HCT116 (cell line): ENCODE measurements at regions of chr11 and their contacts with region 1.

Region 1: DNA sequence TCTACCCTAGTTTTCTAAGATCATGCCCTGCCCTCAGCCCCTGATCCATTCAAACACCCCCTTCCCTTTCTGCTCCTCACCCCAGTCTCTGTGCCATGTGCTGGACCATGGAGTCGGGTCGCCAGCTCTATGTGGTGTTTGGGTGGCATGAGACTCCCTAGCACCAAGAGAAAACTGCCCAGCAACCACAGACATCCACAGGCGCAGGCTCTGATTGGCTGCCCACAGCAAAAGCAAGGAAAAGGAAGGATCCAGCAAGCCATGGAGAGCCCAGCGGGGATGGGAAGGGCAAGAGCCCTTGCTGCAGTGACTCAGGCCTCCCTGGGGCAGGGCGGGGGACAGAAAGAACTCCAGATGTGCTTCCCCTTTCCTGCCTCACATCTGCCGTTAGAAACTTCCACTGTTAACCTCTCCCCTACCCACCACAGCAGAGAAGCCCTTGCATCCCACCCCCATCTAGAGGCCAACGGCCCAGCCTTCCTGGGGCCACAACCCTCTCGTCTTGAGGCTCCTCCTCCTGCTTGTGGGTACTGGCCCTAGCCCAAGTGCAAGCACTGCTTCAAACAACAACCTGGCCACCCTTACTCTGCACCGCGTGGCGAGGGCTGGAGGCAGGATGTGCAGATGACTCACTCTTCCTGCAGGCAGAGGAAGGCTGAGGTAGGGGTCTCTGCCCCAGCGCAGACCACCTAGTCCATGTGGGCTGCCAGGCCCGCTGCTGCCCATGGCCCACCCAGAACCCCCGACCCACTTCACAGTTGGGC is 9.7 kb upstream of the AHNAK start:
- DNase-seq: peak; percentile 93
- ATAC-seq: peak; percentile 60
- H3K4me3 ChIP-seq: peak overlapping the region; percentile 33 to 36
- H3K27ac ChIP-seq: peak overlapping the region; percentile 99
- H3K4me1 ChIP-seq: peaks cover 90 to 100% of the 10 kb centered on the region in 2 experiments
- H3K27me3 ChIP-seq: no peaks in the 10 kb centered on the region
- CTCF ChIP-seq: no peak
- POLR2A ChIP-seq: peak; percentile 21
- RAD21 ChIP-seq: no peak

Region 2: DNA sequence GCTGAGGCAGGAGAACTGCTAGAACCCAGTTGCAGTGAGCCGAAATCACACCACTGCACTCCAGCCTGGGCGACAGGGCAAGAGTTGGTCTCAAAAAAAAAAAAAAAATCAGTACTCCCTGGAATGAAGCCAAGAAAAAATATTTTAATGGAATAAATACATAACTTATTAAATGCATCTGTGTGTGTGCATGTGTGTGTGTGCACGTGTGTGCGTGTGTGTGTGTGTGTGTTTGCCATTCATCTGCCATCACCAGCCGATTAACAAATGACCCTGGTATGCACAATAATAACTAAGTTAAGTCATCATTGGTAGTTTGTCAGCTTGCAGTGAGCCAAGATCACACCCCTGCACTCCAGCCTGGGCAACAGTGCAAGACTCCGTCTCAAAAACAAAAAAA is 172.5 kb before region 1 on chr11:
- CTCF ChIA-PET with region 1: interaction called, 3 read pairs
- POLR2A ChIA-PET with region 1: no interaction called
- RAD21 ChIA-PET with region 1: no interaction called
- intact Hi-C with region 1: loop called (anchors 5 kb)
- DNase-seq: no peak
- ATAC-seq: no peak
- H3K4me3 ChIP-seq: no peak overlapping the region
- H3K27ac ChIP-seq: no peak overlapping the region
- H3K4me1 ChIP-seq: peaks cover 0 to 4% of the 10 kb centered on the region in 2 experiments; a peak in 1 of 4 replicates
- H3K27me3 ChIP-seq: no peaks in the 10 kb centered on the region
- CTCF ChIP-seq: no peak
- POLR2A ChIP-seq: no peak
- RAD21 ChIP-seq: no peak

Region 3: GRCh38 chr11:62394825-62395538 is 161.3 kb before region 1 on chr11:
- CTCF ChIA-PET with region 1: interaction called, 47 read pairs
- POLR2A ChIA-PET with region 1: interaction called, 9 read pairs
- RAD21 ChIA-PET with region 1: no interaction called
- intact Hi-C with region 1: loop called (anchors 1 kb)
- DNase-seq: peak; percentile 61
- ATAC-seq: peak; percentile 82
- H3K4me3 ChIP-seq: no peak overlapping the region; a peak in 1 of 4 replicates
- H3K27ac ChIP-seq: no peak overlapping the region
- H3K4me1 ChIP-seq: peaks cover 9 to 21% of the 10 kb centered on the region in 2 experiments; a peak in 3 of 4 replicates
- H3K27me3 ChIP-seq: no peaks in the 10 kb centered on the region
- CTCF ChIP-seq: peak; percentile 58 to 85 (median 81)
- POLR2A ChIP-seq: no peak
- RAD21 ChIP-seq: peak; percentile 95

Region 4: GRCh38 chr11:62421996-62422395 is 134.3 kb before region 1 on chr11:
- CTCF ChIA-PET with region 1: interaction called, 93 read pairs
- POLR2A ChIA-PET with region 1: interaction called, 15 read pairs
- RAD21 ChIA-PET with region 1: interaction called, 9 to 11 read pairs
- intact Hi-C with region 1: loop called (anchors 1 kb)
- DNase-seq: no peak
- ATAC-seq: no peak
- H3K4me3 ChIP-seq: no peak overlapping the region
- H3K27ac ChIP-seq: no peak overlapping the region
- H3K4me1 ChIP-seq: peaks cover 0 to 20% of the 10 kb centered on the region in 2 experiments; a peak in 2 of 4 replicates
- H3K27me3 ChIP-seq: no peaks in the 10 kb centered on the region
- CTCF ChIP-seq: no peak
- POLR2A ChIP-seq: no peak
- RAD21 ChIP-seq: no peak

Region 5: DNA sequence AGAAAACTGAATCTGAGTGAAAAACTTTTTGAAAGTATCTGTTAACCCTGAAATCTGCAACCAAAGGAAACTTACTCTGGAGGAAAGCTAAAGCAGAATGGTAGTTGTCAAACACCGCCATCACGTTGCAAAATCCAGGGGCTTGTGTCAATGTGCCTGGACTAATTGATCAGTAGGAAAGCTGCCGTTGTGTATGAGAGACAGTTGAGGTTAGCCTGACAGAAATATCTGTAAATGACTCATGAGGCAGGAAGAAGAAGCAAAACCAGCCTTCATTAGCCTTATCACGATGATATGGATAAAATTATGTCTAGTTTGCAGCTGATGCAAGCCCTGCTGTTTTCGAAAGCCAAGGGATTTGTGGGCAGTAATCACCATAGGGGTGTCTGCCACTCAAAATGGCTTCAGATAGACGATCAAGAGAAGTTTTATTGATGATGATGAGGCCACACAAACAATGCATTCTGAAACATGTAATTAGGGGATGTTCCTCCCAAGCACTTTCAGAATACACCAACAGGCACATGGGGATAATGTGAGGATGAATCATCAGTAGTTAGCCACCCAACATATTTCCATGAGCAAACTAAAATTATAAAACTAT is 128.6 kb before region 1 on chr11:
- CTCF ChIA-PET with region 1: interaction called, 93 read pairs
- POLR2A ChIA-PET with region 1: interaction called, 15 read pairs
- RAD21 ChIA-PET with region 1: interaction called, 9 to 11 read pairs
- intact Hi-C with region 1: loop called (anchors 1 kb)
- DNase-seq: no peak
- ATAC-seq: no peak
- H3K4me3 ChIP-seq: no peak overlapping the region
- H3K27ac ChIP-seq: no peak overlapping the region
- H3K4me1 ChIP-seq: peaks cover 0 to 29% of the 10 kb centered on the region in 2 experiments; a peak in 2 of 4 replicates
- H3K27me3 ChIP-seq: no peaks in the 10 kb centered on the region
- CTCF ChIP-seq: no peak
- POLR2A ChIP-seq: no peak
- RAD21 ChIP-seq: no peak

Region 6: DNA sequence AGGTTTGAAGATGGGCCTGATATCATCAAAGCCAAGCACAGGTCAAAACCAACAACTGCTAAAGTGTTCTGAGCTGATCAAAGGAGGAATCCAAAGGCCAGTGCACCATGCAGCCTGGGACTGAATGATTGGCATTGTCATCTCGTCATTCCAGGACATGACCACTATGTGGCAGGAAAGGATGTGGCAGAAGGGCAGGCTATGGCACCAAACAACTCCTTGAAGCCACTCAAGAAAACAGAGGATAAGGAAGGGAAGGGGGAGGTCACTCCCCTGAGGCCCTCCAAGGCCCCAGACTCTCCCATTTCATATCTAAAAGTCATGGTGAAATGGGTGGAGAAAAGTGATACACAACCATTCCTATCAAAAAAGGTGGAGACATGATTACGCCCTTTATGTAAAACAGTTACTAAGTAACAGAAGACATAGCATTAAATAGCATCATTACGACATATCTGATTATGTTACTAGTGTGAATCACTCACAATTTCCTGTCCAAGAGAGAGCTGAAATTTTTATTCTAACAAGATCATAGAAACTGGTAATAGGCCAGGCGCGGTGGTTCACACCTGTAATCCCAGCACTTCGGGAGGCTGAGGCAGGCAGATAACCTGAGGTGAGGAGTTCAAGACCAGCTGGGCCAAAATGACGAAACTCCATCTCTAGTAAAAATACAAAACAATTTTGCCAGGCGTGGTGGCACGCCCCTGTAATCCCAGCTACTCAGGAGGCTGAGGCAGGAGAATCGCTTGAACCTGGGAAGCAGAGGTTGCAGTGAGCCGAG is 59.0 kb before region 1 on chr11:
- CTCF ChIA-PET with region 1: interaction called, 8 read pairs
- POLR2A ChIA-PET with region 1: interaction called, 15 read pairs
- RAD21 ChIA-PET with region 1: interaction called in 1 of 2 experiments, 4 read pairs
- intact Hi-C with region 1: loop called (anchors 1 kb)
- DNase-seq: peak; percentile 74
- ATAC-seq: peak; percentile 77
- H3K4me3 ChIP-seq: no peak overlapping the region
- H3K27ac ChIP-seq: peak overlapping the region; percentile 16; the same call in 1 of the 2 replicates
- H3K4me1 ChIP-seq: peaks cover 31 to 43% of the 10 kb centered on the region in 2 experiments
- H3K27me3 ChIP-seq: no peaks in the 10 kb centered on the region
- CTCF ChIP-seq: peak; percentile 60 to 78 (median 69)
- POLR2A ChIP-seq: no peak
- RAD21 ChIP-seq: peak; percentile 94

Region 7: DNA sequence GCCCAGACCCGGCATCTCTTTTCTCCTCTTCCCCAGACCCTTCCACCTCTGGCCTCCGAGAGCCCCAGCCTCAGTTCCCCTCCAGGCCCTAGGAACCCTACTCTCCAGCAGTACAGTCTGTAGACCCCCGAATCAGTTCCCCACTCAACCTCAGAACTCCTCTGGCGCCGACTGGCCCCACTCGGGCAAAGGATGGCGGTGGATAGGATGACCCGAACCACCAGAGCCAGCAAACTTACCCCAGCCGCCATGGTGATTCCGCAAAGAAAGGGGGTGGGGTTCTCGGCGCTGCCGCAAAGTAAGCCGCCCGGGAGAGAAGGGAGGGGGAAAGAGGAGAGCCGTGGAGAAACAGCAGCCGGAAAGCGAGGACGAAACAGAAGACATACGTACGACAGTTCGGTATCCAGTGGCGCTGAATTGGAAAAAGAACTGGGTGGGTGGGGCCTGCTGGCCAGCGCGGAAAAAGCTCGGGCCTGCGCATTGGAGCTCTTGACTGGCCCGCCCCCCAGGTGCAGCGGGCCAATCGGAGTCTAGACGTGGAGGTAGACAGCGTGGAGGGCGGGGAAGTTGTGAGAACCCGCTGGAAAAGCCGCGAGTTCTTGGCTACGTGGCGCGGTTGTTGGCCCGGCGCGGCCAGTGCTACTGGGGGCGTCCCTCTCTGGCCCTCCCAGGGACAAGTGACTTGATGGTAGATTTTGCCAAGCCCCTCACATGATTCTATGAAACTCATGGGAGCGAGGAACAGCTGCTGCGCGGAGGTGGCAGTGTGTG is 17.5 kb after region 1 on chr11 and contains the start of gene EEF1G:
- CTCF ChIA-PET with region 1: interaction called, 7 read pairs
- POLR2A ChIA-PET with region 1: interaction called, 12 read pairs
- RAD21 ChIA-PET with region 1: no interaction called
- intact Hi-C with region 1: no loop called
- DNase-seq: peak; percentile 99
- ATAC-seq: peak; percentile 95
- H3K4me3 ChIP-seq: peak within 1 kb of the TSS; percentile 76 to 99
- H3K27ac ChIP-seq: peak within 1 kb of the TSS; percentile 94
- H3K4me1 ChIP-seq: peaks cover 8 to 30% of the 10 kb centered on the region in 2 experiments
- H3K27me3 ChIP-seq: no peaks in the 10 kb centered on the region
- CTCF ChIP-seq: no peak
- POLR2A ChIP-seq: peak; percentile 79
- RAD21 ChIP-seq: no peak
- total RNA-seq, gene EEF1G: 1,901 TPM

Region 8: GRCh38 chr11:62757846-62758788 is 201.8 kb after region 1 on chr11:
- CTCF ChIA-PET with region 1: no interaction called
- POLR2A ChIA-PET with region 1: no interaction called
- RAD21 ChIA-PET with region 1: no interaction called
- intact Hi-C with region 1: no loop called
- DNase-seq: no peak
- ATAC-seq: no peak
- H3K4me3 ChIP-seq: no peak overlapping the region
- H3K27ac ChIP-seq: no peak overlapping the region
- H3K4me1 ChIP-seq: peaks cover 14 to 31% of the 10 kb centered on the region in 2 experiments
- H3K27me3 ChIP-seq: no peaks in the 10 kb centered on the region
- CTCF ChIP-seq: no peak
- POLR2A ChIP-seq: no peak
- RAD21 ChIP-seq: no peak